ENCODE measurements at regions of chr18 and their contacts with region 1.

Region 1: GRCh38 chr18:46173393-46174341 is 69.5 kb downstream of the HAUS1 start:
- DNase-seq: peak; percentile 95
- ATAC-seq: peak; percentile 87
- H3K4me3 ChIP-seq: peak overlapping the region; percentile 90 to 100 (median 98)
- H3K4me3 Mint-ChIP-seq: peak overlapping the region; percentile 97
- H3K27ac ChIP-seq: peak overlapping the region; percentile 88 to 94
- H3K27ac Mint-ChIP-seq: peak overlapping the region; percentile 94
- H3K4me1 ChIP-seq: peaks cover 25 to 33% of the 10 kb centered on the region in 2 donors
- H3K4me1 Mint-ChIP-seq: peaks cover 45% of the 10 kb centered on the region
- H3K27me3 ChIP-seq: no peaks in the 10 kb centered on the region
- H3K27me3 Mint-ChIP-seq: no peaks in the 10 kb centered on the region
- CTCF ChIP-seq: peak; percentile 96

Region 2: DNA sequence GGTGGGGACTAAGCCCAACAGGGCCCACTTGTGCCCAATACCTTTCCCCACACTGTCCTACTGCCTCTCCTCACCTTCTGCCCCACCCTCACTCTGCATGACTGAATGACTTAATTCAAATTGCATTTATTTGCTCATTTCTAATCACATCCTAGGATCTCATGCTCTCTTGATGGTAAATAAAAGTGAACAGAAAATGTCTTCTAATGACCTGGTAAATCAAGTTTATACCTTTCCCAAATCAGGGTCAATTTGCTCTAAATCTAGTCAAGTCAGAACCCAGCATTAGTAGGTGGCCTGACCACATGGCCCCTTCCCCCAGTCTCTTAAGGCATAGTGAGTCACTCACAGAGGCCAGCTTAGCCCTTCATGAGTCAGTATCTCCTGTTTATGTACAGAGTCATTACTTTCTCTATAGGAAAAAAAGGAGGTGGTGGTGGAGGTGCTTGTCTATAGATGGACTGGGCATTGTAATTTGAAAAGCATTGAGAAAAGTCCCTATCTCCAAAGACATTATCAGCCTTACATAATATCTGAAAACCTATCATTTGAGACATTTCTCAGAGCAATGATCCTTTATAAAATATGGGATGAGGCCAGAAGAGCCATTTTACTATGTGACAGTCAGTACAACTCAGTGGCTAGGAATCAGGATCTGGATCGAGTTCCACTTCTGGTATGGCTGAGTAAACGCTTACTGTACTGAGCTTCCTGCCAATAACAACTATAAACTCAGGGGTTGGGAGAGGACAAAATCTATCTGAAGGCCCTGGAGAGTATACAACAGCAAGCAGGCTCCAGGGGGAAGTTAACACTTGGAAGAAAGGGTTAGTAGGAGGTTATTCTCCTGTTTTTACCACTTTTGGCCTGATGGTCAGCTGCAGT is 370.8 kb before region 1 on chr18:
- CTCF ChIA-PET with region 1: no interaction called
- POLR2A ChIA-PET with region 1: no interaction called
- intact Hi-C with region 1: no loop called
- DNase-seq: no peak
- ATAC-seq: no peak
- H3K4me3 ChIP-seq: no peak overlapping the region
- H3K4me3 Mint-ChIP-seq: no peak overlapping the region
- H3K27ac ChIP-seq: no peak overlapping the region
- H3K27ac Mint-ChIP-seq: no peak overlapping the region
- H3K4me1 ChIP-seq: no peaks in the 10 kb centered on the region
- H3K4me1 Mint-ChIP-seq: no peaks in the 10 kb centered on the region
- H3K27me3 ChIP-seq: peaks cover 0 to 9% (median 3%) of the 10 kb centered on the region in 4 experiments
- H3K27me3 Mint-ChIP-seq: peaks cover 32% of the 10 kb centered on the region
- CTCF ChIP-seq: no peak

Region 3: GRCh38 chr18:46097801-46098615 is 75.7 kb before region 1 on chr18 and contains the start of gene ATP5F1A:
- CTCF ChIA-PET with region 1: interaction called, 16 read pairs
- POLR2A ChIA-PET with region 1: interaction called, 3 read pairs
- intact Hi-C with region 1: loop called (anchors 1 kb)
- DNase-seq: peak; percentile 94
- ATAC-seq: peak; percentile 88
- H3K4me3 ChIP-seq: peak within 1 kb of the TSS; percentile 66 to 80 (median 75)
- H3K4me3 Mint-ChIP-seq: peak within 1 kb of the TSS; percentile 99
- H3K27ac ChIP-seq: peak within 1 kb of the TSS; percentile 76 to 90
- H3K27ac Mint-ChIP-seq: peak within 1 kb of the TSS; percentile 97
- H3K4me1 ChIP-seq: peaks cover 25 to 26% of the 10 kb centered on the region in 2 donors
- H3K4me1 Mint-ChIP-seq: peaks cover 27% of the 10 kb centered on the region
- H3K27me3 ChIP-seq: no peaks in the 10 kb centered on the region
- H3K27me3 Mint-ChIP-seq: no peaks in the 10 kb centered on the region
- CTCF ChIP-seq: no peak
- total RNA-seq, gene ATP5F1A: 235 and 247 TPM in 2 replicates

Region 4: DNA sequence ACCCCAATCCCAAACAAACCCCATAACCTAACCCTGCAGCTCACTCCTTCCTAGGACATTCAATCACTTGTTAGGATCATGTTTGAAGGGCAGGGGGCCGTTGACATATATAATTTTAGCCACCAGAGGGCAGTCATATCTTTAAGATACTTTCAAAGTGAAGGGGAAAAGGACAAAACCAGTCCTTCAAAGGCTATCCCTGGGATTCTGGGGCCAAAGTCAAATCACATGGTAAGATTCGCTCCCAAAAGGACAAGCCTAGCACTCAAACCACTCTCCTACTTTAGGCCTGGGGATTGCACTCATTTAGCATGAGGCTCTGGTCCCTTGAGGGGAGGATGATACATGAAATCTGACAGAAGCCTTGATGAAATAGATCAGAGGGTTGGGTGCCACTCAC is 24.9 kb before region 1 on chr18:
- CTCF ChIA-PET with region 1: interaction called, 15 read pairs
- POLR2A ChIA-PET with region 1: no interaction called
- intact Hi-C with region 1: loop called (anchors 1 kb)
- DNase-seq: peak; percentile 73
- ATAC-seq: peak; percentile 41
- H3K4me3 ChIP-seq: no peak overlapping the region
- H3K4me3 Mint-ChIP-seq: no peak overlapping the region
- H3K27ac ChIP-seq: no peak overlapping the region
- H3K27ac Mint-ChIP-seq: no peak overlapping the region
- H3K4me1 ChIP-seq: no peaks in the 10 kb centered on the region
- H3K4me1 Mint-ChIP-seq: no peaks in the 10 kb centered on the region
- H3K27me3 ChIP-seq: no peaks in the 10 kb centered on the region
- H3K27me3 Mint-ChIP-seq: no peaks in the 10 kb centered on the region
- CTCF ChIP-seq: peak; percentile 83

Region 5: GRCh38 chr18:46213295-46213694 is 39.6 kb after region 1 on chr18:
- CTCF ChIA-PET with region 1: interaction called, 31 read pairs
- POLR2A ChIA-PET with region 1: interaction called, 10 read pairs
- intact Hi-C with region 1: loop called (anchors 1 kb)
- DNase-seq: peak; percentile 42
- ATAC-seq: peak; percentile 33
- H3K4me3 ChIP-seq: no peak overlapping the region
- H3K4me3 Mint-ChIP-seq: no peak overlapping the region
- H3K27ac ChIP-seq: no peak overlapping the region
- H3K27ac Mint-ChIP-seq: no peak overlapping the region
- H3K4me1 ChIP-seq: peaks cover 10 to 20% of the 10 kb centered on the region in 2 donors
- H3K4me1 Mint-ChIP-seq: peaks cover 61% of the 10 kb centered on the region
- H3K27me3 ChIP-seq: no peaks in the 10 kb centered on the region
- H3K27me3 Mint-ChIP-seq: no peaks in the 10 kb centered on the region
- CTCF ChIP-seq: peak; percentile 79

Region 6: DNA sequence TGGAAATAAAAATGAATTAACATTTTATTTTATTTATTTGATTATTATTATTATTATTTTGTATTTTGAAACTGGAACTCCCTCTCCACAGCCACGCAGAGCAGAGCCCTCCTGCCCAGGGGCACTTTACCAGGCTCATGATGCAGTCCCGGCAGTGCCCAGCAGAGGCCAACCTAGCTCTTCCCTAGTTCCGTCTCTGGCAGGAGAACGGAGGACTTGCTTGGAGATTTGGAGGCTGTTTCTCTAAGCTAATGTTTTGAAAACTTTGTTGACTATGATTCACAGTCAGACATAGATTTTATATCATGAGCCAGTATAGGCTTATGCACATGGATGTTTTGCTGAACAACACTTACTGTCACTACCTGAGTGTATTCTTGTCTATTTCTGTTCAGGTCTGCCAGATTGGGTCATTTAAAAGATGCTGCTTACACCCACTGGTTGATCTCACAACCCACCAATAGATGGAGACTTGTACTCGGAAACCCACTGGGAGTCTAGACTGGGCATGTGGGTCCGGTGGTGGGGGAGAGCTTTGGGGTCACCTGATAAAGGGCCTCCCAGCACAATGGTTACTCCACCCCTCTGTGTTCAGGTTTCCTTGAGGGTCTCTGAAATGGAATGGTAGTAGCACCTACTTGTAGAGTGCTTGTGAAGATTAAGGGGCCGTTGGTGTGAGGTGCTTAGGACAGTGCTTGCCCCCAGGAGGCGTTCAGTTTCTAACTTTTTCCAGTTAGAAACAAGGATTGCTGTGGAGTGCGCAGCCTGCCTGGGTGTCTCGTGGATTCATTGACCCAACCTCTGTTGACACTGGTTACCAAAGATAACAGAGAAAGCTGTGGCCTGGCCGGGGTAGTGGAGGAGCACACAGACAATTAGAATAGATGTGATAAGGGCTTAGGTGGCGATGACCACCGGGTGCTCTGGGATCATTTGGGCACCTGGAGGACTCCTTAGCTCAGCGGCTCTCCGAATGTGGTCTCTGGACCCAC is 107.8 kb after region 1 on chr18:
- CTCF ChIA-PET with region 1: interaction called, 14 read pairs
- POLR2A ChIA-PET with region 1: no interaction called
- intact Hi-C with region 1: no loop called
- DNase-seq: peak; percentile 61
- ATAC-seq: peak; percentile 87
- H3K4me3 ChIP-seq: no peak overlapping the region
- H3K4me3 Mint-ChIP-seq: no peak overlapping the region
- H3K27ac ChIP-seq: no peak overlapping the region
- H3K27ac Mint-ChIP-seq: no peak overlapping the region
- H3K4me1 ChIP-seq: peaks cover 0 to 4% of the 10 kb centered on the region in 2 donors
- H3K4me1 Mint-ChIP-seq: peaks cover 6% of the 10 kb centered on the region
- H3K27me3 ChIP-seq: no peaks in the 10 kb centered on the region
- H3K27me3 Mint-ChIP-seq: no peaks in the 10 kb centered on the region
- CTCF ChIP-seq: peak; percentile 93

Region 7: DNA sequence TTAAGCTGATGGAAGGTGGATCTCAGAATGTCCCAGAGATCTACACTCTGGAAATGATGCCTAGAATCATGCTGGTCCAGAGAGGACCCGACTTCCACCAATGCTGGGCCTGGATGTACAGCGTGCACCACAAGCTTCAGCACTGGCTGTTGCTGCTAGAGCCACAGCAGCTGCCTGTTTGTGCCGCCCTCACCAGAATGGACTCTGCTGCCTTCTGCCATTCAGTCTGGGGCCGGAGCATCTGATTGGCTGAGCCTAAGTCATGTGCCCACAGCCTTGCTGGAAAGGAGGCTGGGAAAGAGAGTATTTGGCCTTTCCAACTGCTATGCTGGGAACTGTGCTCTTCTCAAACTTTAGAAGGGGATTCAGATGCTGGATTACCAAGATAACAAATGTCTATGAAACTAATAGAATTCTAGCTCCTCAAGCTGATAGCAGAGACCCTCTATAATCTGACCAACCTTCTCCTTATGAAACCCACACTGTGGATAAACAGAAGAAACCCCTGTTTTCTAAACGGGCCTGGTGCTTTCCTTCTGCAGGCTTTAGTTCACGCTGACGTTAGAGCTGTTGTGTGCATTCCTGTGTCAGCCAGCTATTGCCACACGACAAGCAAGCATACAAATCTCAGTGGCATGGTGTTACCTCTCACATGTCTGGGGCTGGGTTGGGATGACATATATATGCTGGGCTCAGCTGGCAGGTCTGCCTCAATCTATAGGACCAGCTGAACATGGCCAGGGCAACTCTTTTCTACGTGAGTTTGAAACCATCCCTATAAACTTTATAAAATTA is 487.5 kb after region 1 on chr18:
- CTCF ChIA-PET with region 1: interaction called, 46 read pairs
- POLR2A ChIA-PET with region 1: no interaction called
- intact Hi-C with region 1: no loop called
- DNase-seq: no peak
- ATAC-seq: no peak
- H3K4me3 ChIP-seq: no peak overlapping the region
- H3K4me3 Mint-ChIP-seq: no peak overlapping the region
- H3K27ac ChIP-seq: no peak overlapping the region
- H3K27ac Mint-ChIP-seq: no peak overlapping the region
- H3K4me1 ChIP-seq: no peaks in the 10 kb centered on the region
- H3K4me1 Mint-ChIP-seq: no peaks in the 10 kb centered on the region
- H3K27me3 ChIP-seq: peaks cover 0 to 16% (median 0%) of the 10 kb centered on the region in 4 experiments
- H3K27me3 Mint-ChIP-seq: peaks cover 19% of the 10 kb centered on the region
- CTCF ChIP-seq: no peak

Measured in B cell (primary cell).